ENCODE measurements at regions of chr14 and their contacts with region 1.

Region 1: GRCh38 chr14:65866886-65867285 is 454.4 kb downstream of the FUT8 start:
- DNase-seq: no peak
- ATAC-seq: no peak
- H3K4me3 Mint-ChIP-seq: no peak overlapping the region
- H3K27ac Mint-ChIP-seq: no peak overlapping the region
- H3K4me1 Mint-ChIP-seq: peaks cover 45% of the 10 kb centered on the region
- H3K27me3 Mint-ChIP-seq: no peaks in the 10 kb centered on the region
- CTCF ChIP-seq: no peak

Region 2: DNA sequence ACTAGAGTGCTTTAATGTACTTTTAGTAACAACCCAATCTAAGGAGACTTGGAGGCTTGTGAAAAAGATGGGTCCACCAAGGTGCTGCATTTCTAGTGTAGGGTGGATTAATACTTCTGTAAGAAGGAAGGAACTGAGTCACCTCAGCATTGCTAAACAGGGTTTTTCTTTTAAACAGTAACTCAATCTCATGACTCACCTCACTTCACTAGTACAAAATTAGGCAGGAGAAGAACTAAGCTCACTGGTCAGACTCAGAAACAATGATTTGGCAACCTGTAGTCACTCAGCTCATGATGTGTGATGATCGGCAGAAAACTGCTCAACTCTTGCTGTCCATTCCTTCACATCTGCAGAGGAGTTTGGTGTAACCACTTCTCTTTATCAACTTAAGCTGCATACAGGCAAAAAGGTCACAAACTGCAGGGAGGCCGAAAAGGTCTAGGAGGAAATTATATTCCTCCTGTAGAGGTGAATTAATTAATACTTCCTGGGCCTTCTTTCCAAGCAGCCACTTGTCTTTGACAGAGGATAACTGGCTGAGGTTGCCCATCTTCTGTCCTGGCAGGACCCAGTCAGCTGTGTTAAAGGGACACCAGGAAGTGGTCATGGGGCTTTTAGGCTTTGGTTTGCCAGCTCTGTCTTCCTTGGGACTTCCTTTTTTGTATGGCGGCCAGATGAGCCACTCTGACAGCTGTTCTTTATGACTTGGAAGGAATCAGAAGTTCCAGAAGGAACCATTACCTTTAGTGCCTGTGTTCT is 12.5 kb after region 1 on chr14:
- CTCF ChIA-PET with region 1: interaction called, 11 read pairs
- POLR2A ChIA-PET with region 1: no interaction called
- intact Hi-C with region 1: no loop called
- DNase-seq: peak; percentile 19
- ATAC-seq: peak; percentile 89
- H3K4me3 Mint-ChIP-seq: no peak overlapping the region
- H3K27ac Mint-ChIP-seq: peak overlapping the region; percentile 65
- H3K4me1 Mint-ChIP-seq: peaks cover 18% of the 10 kb centered on the region
- H3K27me3 Mint-ChIP-seq: no peaks in the 10 kb centered on the region
- CTCF ChIP-seq: no peak